ENCODE measurements at regions of chr3 and their contacts with region 1.

Region 1: GRCh38 chr3:13091898-13092611 is 18.8 kb upstream of the IQSEC1 start:
- DNase-seq: peak; percentile 60
- ATAC-seq: peak; percentile 93
- H3K4me3 ChIP-seq: no peak overlapping the region
- H3K27ac ChIP-seq: no peak overlapping the region
- H3K4me1 ChIP-seq: peaks cover 5 to 7% of the 10 kb centered on the region in 2 experiments; a peak in 2 of 4 replicates
- H3K27me3 ChIP-seq: no peaks in the 10 kb centered on the region
- CTCF ChIP-seq: peak; percentile 87 to 91 (median 90)
- POLR2A ChIP-seq: no peak
- RAD21 ChIP-seq: peak; percentile 96

Region 2: DNA sequence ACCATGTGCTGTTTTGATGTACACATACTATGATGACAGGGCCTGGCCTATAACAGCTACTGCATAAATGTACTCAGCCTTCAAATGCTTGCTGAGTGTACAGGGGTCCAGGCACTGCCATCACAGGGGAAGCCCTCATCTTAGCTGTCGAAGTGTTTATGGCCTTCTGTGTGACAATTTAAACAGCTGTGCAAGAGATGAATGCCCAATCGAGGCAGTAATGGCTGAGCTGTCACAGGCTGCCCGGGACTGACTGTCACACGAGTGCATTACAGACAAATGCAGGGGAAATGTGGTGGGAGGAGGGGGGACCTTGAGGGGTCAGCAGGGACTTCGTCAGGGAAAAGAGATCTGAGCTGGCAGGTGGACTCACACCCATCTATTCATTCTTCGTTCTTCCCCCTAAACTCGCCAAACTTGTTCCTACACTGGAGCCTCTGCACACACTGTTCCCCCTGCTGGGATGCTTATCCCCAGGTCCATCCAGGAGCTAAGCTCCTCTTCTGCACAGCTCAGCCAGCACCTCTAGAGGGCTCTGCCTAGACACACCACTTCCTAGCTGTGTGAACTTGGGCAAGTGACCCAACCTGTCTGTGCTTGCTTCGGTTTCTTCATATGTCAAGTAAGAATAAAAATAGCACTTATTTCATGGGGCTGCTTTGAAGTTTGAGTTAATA is 137.4 kb after region 1 on chr3:
- CTCF ChIA-PET with region 1: interaction called, 11 read pairs
- POLR2A ChIA-PET with region 1: no interaction called
- RAD21 ChIA-PET with region 1: no interaction called
- intact Hi-C with region 1: no loop called
- DNase-seq: peak; percentile 65
- ATAC-seq: peak; percentile 100
- H3K4me3 ChIP-seq: no peak overlapping the region
- H3K27ac ChIP-seq: no peak overlapping the region
- H3K4me1 ChIP-seq: peaks cover 5 to 12% of the 10 kb centered on the region in 2 experiments; a peak in 3 of 4 replicates
- H3K27me3 ChIP-seq: no peaks in the 10 kb centered on the region
- CTCF ChIP-seq: peak; percentile 75 to 78 (median 76)
- POLR2A ChIP-seq: no peak
- RAD21 ChIP-seq: peak; percentile 74

Region 3: GRCh38 chr3:13452490-13453335 is 360.7 kb after region 1 on chr3:
- CTCF ChIA-PET with region 1: interaction called, 34 read pairs
- POLR2A ChIA-PET with region 1: no interaction called
- RAD21 ChIA-PET with region 1: interaction called, 9 to 10 read pairs
- intact Hi-C with region 1: loop called (anchors 1 kb)
- DNase-seq: peak; percentile 31
- ATAC-seq: peak; percentile 64
- H3K4me3 ChIP-seq: peak overlapping the region in 1 of 2 experiments; percentile 42; a peak in 1 of 4 replicates
- H3K27ac ChIP-seq: peak overlapping the region; percentile 19; the same call in 1 of the 2 replicates
- H3K4me1 ChIP-seq: peaks cover 3 to 21% of the 10 kb centered on the region in 2 experiments; a peak in 2 of 4 replicates
- H3K27me3 ChIP-seq: no peaks in the 10 kb centered on the region
- CTCF ChIP-seq: peak; percentile 55 to 80 (median 69); a peak in 5 of 6 replicates
- POLR2A ChIP-seq: no peak
- RAD21 ChIP-seq: peak; percentile 87

Region 4: GRCh38 chr3:13495921-13496723 is 404.1 kb after region 1 on chr3:
- CTCF ChIA-PET with region 1: interaction called, 17 read pairs
- POLR2A ChIA-PET with region 1: no interaction called
- RAD21 ChIA-PET with region 1: no interaction called
- intact Hi-C with region 1: no loop called
- DNase-seq: peak; percentile 48
- ATAC-seq: peak; percentile 81
- H3K4me3 ChIP-seq: no peak overlapping the region
- H3K27ac ChIP-seq: no peak overlapping the region
- H3K4me1 ChIP-seq: peaks cover 0 to 11% of the 10 kb centered on the region in 2 experiments; a peak in 1 of 4 replicates
- H3K27me3 ChIP-seq: no peaks in the 10 kb centered on the region
- CTCF ChIP-seq: peak; percentile 93 to 96 (median 94)
- POLR2A ChIP-seq: no peak
- RAD21 ChIP-seq: peak; percentile 98

Region 5: DNA sequence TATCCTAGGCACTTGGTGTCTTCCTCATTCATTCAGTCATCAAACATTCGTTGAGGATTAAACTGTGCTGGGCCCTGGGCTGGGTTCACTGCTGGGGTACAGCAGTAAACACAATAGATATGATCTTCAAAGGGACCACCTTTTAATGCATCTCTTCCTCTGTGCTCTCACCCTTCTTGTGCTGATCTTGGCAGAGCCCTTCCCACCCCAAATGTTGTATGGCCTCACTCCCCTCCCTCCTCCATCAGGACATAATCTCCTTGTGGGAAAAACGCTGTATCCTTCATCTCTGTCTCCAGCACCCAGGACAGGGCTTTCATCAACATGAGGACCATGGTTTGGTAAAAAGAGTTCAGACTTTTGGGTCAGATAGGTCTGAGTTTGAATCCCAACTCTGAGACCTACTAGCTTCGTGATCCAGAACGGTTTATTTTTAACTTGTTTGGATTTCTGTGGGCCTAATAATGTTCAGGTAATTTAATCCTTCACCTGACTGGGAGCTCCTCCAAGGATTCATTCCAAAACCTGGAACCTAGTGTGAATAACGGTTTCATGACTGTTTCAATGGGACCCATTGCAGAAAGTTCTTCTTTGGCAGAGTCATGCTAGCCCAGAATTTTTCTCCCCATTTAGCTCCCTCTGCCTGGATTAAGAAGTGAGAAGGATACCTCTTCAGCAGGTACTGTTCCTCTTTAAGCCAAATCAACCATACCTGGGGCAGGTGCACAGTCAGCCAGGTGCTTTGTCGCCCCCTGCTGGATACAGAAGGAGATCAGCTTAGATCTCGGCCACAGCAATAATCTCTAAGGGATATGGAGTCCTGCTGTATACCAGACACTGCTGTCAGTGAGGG is 793.0 kb after region 1 on chr3:
- CTCF ChIA-PET with region 1: no interaction called
- POLR2A ChIA-PET with region 1: no interaction called
- RAD21 ChIA-PET with region 1: no interaction called
- intact Hi-C with region 1: loop called (anchors 10 kb)
- DNase-seq: peak; percentile 56
- ATAC-seq: peak; percentile 86
- H3K4me3 ChIP-seq: no peak overlapping the region
- H3K27ac ChIP-seq: no peak overlapping the region
- H3K4me1 ChIP-seq: peaks cover 0 to 12% of the 10 kb centered on the region in 2 experiments; a peak in 3 of 4 replicates
- H3K27me3 ChIP-seq: 0 out of 2 replicates have a peak, but pooled peaks cover 2% of the 10 kb centered on the region
- CTCF ChIP-seq: peak; percentile 90 to 96 (median 92)
- POLR2A ChIP-seq: no peak
- RAD21 ChIP-seq: peak; percentile 97

Measured in HCT116 (cell line).